Naive thymus-derived CD8-positive, alpha-beta T cell (primary cell): ENCODE measurements at regions of chr2 and their contacts with region 1.

Region 1: GRCh38 chr2:203740780-203741281 is 34.4 kb downstream of the CD28 start:
- DNase-seq: peak in 9 of 10 donors; percentile 7 to 90 (median 66)
- ATAC-seq: peak; percentile 81 to 87
- H3K4me3 Mint-ChIP-seq: peak overlapping the region; percentile 48 to 85 (median 67)
- H3K27ac Mint-ChIP-seq: peak overlapping the region; percentile 88 to 99 (median 96)
- H3K4me1 Mint-ChIP-seq: peaks cover 30 to 89% (median 78%) of the 10 kb centered on the region in 4 donors
- H3K27me3 Mint-ChIP-seq: no peaks in the 10 kb centered on the region

Region 2: DNA sequence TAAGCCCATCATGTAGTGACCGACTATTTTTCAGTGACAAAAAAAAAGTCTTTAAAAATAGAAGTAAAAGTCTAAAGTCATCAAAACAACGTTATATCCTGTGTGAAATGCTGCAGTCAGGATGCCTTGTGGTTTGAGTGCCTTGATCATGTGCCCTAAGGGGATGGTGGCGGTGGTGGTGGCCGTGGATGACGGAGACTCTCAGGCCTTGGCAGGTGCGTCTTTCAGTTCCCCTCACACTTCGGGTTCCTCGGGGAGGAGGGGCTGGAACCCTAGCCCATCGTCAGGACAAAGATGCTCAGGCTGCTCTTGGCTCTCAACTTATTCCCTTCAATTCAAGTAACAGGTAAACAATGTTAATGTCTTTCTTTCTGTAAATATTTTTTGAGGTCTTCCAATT is 34.4 kb before region 1 on chr2 and contains the start of gene CD28:
- POLR2A ChIA-PET with region 1: interaction called, 85 read pairs
- DNase-seq: peak; percentile 64 to 96 (median 90)
- ATAC-seq: peak; percentile 86 to 90
- H3K4me3 Mint-ChIP-seq: peak within 1 kb of the TSS; percentile 82 to 97 (median 92)
- H3K27ac Mint-ChIP-seq: peak within 1 kb of the TSS; percentile 93 to 99 (median 96)
- H3K4me1 Mint-ChIP-seq: peaks cover 30 to 56% (median 50%) of the 10 kb centered on the region in 4 donors
- H3K27me3 Mint-ChIP-seq: no peaks in the 10 kb centered on the region
- polyA plus RNA-seq, gene CD28: 15.8 to 32.0 (median 29.3) TPM

Region 3: GRCh38 chr2:203730076-203730729 is 10.6 kb before region 1 on chr2:
- POLR2A ChIA-PET with region 1: interaction called, 31 read pairs
- DNase-seq: no peak
- ATAC-seq: peak in 1 of 2 donors; percentile 33
- H3K4me3 Mint-ChIP-seq: peak overlapping the region in 6 of 10 donors; percentile 4 to 42 (median 28)
- H3K27ac Mint-ChIP-seq: peak overlapping the region; percentile 2 to 98 (median 43)
- H3K4me1 Mint-ChIP-seq: peaks cover 40 to 86% (median 71%) of the 10 kb centered on the region in 4 donors
- H3K27me3 Mint-ChIP-seq: no peaks in the 10 kb centered on the region

Region 4: DNA sequence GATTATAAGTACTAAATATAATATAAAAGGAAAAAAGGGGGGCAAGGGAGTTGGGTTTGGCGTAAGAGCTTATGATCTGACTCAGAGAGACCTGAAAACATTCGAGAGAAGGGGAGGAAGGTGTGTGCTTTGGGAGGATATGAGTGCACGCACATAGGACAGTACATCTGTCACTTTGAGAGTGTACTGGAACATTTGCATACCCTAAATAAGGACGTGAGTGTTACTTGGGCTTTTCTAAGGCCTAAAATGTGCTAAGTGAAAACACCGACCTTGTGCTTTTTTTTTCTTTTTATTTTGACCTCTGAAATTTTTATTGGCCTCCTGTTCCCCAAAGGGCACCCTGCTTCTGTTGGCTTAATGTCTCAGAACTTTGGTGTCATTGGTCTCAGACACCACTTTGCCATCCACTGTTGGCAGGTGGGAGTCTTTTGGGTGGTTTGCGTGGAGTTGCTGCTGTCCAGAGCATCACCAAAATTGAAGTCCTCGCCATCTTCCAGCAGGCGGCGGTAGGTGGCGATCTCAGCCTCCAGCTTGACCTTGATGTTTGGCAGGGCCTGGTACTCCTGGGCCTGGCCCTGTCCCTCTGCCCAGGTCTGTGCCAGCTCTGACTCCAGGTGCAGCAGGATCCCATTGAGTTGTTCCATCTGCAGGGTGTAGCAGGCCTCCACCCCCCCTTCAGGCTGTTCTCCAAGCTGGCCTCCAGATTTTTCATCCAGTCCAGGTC is 23.3 kb after region 1 on chr2:
- POLR2A ChIA-PET with region 1: interaction called, 16 read pairs
- DNase-seq: peak in 3 of 10 donors; percentile 20 to 30 (median 22)
- ATAC-seq: peak; percentile 73 to 89
- H3K4me3 Mint-ChIP-seq: peak overlapping the region in 7 of 10 donors; percentile 29 to 72 (median 52)
- H3K27ac Mint-ChIP-seq: peak overlapping the region; percentile 61 to 98 (median 84)
- H3K4me1 Mint-ChIP-seq: peaks cover 23 to 83% (median 66%) of the 10 kb centered on the region in 4 donors
- H3K27me3 Mint-ChIP-seq: no peaks in the 10 kb centered on the region

Region 5: GRCh38 chr2:203814661-203815540 is 74.1 kb after region 1 on chr2:
- POLR2A ChIA-PET with region 1: interaction called, 14 read pairs
- DNase-seq: peak in 9 of 10 donors; percentile 15 to 77 (median 42)
- ATAC-seq: peak; percentile 90 to 91
- H3K4me3 Mint-ChIP-seq: peak overlapping the region; percentile 54 to 84 (median 76)
- H3K27ac Mint-ChIP-seq: peak overlapping the region in 9 of 10 donors; percentile 12 to 92 (median 79)
- H3K4me1 Mint-ChIP-seq: peaks cover 9 to 47% (median 43%) of the 10 kb centered on the region in 4 donors
- H3K27me3 Mint-ChIP-seq: peaks cover 0 to 11% (median 0%) of the 10 kb centered on the region in 5 donors

Region 6: GRCh38 chr2:203871371-203871983 is 130.6 kb after region 1 on chr2:
- POLR2A ChIA-PET with region 1: no interaction called
- DNase-seq: no peak
- ATAC-seq: no peak
- H3K4me3 Mint-ChIP-seq: peak overlapping the region in 6 of 10 donors; percentile 39 to 93 (median 52)
- H3K27ac Mint-ChIP-seq: peak overlapping the region in 9 of 10 donors; percentile 18 to 97 (median 76)
- H3K4me1 Mint-ChIP-seq: peaks cover 41 to 82% (median 79%) of the 10 kb centered on the region in 4 donors
- H3K27me3 Mint-ChIP-seq: no peaks in the 10 kb centered on the region